CD8-positive, alpha-beta T cell (primary cell): ENCODE measurements at regions of chr5 and their contacts with region 1.

Region 1: DNA sequence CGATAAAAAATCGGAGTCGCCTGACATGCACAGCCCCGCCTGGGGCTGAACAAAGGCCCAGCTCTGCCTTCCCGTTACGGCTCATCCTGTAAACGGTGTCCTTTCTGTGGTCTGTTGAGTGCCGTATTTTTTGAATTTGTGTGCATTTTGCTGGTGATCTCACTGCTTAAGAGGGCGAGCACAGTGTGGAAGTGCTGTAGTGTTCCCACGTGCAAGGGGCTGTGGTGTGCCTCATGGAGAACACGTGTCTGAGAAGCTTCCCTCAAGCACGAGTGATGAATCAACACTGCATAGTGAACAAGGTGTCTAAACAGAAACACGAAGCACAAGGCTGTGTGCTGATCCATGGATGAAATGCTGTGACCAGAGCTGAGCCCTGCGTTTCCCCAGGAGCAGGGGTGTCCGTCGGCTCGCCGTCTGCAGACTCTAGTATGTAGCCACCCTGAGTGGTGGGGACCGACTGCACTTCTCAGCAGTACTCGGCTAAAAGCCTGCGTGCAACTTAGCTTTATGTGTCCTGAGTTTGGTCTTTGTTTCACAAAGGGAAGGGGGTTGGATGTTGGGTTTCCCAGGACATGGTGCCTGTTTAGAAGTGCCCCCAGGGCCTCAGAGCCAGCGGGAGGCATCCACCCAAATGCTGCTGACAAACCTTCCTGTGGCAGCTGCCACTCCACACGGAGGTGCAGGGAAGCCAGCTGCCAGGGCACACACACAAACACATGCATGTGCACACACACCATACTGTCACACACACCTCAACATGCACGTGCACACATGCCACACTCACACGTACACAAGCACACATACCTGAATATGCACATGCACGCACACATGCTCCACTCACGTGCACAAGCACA is 77.2 kb upstream of the IRX4 start:
- DNase-seq: no peak
- ATAC-seq: no peak
- H3K4me3 ChIP-seq: no peak overlapping the region
- H3K4me3 Mint-ChIP-seq: no peak overlapping the region
- H3K27ac ChIP-seq: no peak overlapping the region
- H3K27ac Mint-ChIP-seq: no peak overlapping the region
- H3K4me1 ChIP-seq: no peaks in the 10 kb centered on the region
- H3K4me1 Mint-ChIP-seq: no peaks in the 10 kb centered on the region
- H3K27me3 ChIP-seq: no peaks in the 10 kb centered on the region
- H3K27me3 Mint-ChIP-seq: peaks cover 18% of the 10 kb centered on the region
- CTCF ChIP-seq: no peak

Region 2: DNA sequence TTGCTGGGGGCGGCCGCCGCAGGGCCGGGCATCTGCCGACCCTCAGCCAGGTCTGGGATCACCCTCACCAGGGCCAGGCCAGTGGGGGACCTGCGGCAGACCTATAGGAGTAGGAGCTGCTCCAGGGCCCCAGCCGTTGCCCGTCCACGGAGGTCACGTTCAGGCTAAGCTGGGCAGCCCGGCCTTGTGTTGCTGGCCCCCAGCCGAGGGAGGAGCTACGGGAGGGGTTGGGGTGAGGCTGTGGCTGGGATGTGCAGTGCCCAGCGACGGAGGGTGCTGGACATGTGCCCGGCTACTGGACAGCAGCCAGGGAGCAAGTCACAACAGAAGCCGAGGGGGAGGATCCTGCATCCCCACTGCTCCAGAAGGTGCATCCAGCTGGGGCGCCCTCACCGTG is 798.1 kb before region 1 on chr5:
- CTCF ChIA-PET with region 1: no interaction called
- POLR2A ChIA-PET with region 1: no interaction called
- intact Hi-C with region 1: no loop called
- DNase-seq: no peak
- ATAC-seq: no peak
- H3K4me3 ChIP-seq: no peak overlapping the region
- H3K4me3 Mint-ChIP-seq: no peak overlapping the region
- H3K27ac ChIP-seq: no peak overlapping the region
- H3K27ac Mint-ChIP-seq: no peak overlapping the region
- H3K4me1 ChIP-seq: no peaks in the 10 kb centered on the region
- H3K4me1 Mint-ChIP-seq: no peaks in the 10 kb centered on the region
- H3K27me3 ChIP-seq: peaks cover 0 to 6% of the 10 kb centered on the region in 2 experiments
- H3K27me3 Mint-ChIP-seq: peaks cover 26% of the 10 kb centered on the region
- CTCF ChIP-seq: no peak

Region 3: GRCh38 chr5:1763548-1763911 is 196.4 kb before region 1 on chr5:
- CTCF ChIA-PET with region 1: no interaction called
- POLR2A ChIA-PET with region 1: no interaction called
- intact Hi-C with region 1: loop called in 1 of 2 experiments (anchors 5 kb)
- DNase-seq: peak in 6 of 9 experiments; percentile 17 to 61 (median 48)
- ATAC-seq: no peak
- H3K4me3 ChIP-seq: no peak overlapping the region
- H3K4me3 Mint-ChIP-seq: no peak overlapping the region
- H3K27ac ChIP-seq: no peak overlapping the region
- H3K27ac Mint-ChIP-seq: no peak overlapping the region
- H3K4me1 ChIP-seq: no peaks in the 10 kb centered on the region
- H3K4me1 Mint-ChIP-seq: no peaks in the 10 kb centered on the region
- H3K27me3 ChIP-seq: no peaks in the 10 kb centered on the region
- H3K27me3 Mint-ChIP-seq: peaks cover 14% of the 10 kb centered on the region
- CTCF ChIP-seq: peak; percentile 58

Region 4: GRCh38 chr5:2075365-2075764 is 115.4 kb after region 1 on chr5:
- CTCF ChIA-PET with region 1: no interaction called
- POLR2A ChIA-PET with region 1: no interaction called
- intact Hi-C with region 1: no loop called
- DNase-seq: no peak
- ATAC-seq: no peak
- H3K4me3 ChIP-seq: no peak overlapping the region
- H3K4me3 Mint-ChIP-seq: no peak overlapping the region
- H3K27ac ChIP-seq: no peak overlapping the region
- H3K27ac Mint-ChIP-seq: no peak overlapping the region
- H3K4me1 ChIP-seq: no peaks in the 10 kb centered on the region
- H3K4me1 Mint-ChIP-seq: no peaks in the 10 kb centered on the region
- H3K27me3 ChIP-seq: no peaks in the 10 kb centered on the region
- H3K27me3 Mint-ChIP-seq: peaks cover 24% of the 10 kb centered on the region
- CTCF ChIP-seq: no peak

Region 5: DNA sequence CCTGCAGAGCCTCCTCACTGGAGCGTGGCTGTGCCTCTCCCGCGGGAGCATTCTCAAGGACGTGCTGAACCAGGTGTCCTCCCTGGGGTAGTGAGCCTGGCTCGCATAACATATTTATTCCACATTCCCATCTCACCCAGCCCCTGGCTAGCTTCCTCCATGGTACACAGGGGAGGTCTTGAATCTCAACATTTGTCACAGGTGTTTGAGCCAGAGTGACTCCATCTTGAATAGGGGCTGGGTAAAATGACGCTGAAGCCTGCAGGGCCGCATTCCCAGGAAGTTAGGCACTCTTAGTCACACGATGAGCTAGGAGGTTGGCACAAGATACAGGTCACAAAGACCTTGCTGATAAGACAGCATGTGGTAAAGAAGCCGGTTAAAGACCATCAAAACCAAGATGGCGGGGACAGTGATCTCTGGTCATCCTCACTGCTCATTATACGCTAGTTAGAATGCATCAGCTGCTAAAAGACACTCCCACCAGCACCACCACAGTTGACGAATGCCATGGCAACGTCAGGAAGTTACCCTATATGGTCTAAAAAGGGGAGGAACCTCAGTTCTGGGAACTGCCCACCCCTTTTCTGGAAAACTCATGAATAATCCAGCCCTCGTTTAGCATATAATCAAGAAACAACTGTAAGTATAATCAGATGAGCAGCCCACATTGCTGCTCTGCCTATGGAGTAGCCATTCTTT is 196.6 kb after region 1 on chr5:
- CTCF ChIA-PET with region 1: no interaction called
- POLR2A ChIA-PET with region 1: no interaction called
- intact Hi-C with region 1: no loop called
- DNase-seq: no peak
- ATAC-seq: no peak
- H3K4me3 ChIP-seq: no peak overlapping the region
- H3K4me3 Mint-ChIP-seq: no peak overlapping the region
- H3K27ac ChIP-seq: no peak overlapping the region
- H3K27ac Mint-ChIP-seq: no peak overlapping the region
- H3K4me1 ChIP-seq: no peaks in the 10 kb centered on the region
- H3K4me1 Mint-ChIP-seq: no peaks in the 10 kb centered on the region
- H3K27me3 ChIP-seq: no peaks in the 10 kb centered on the region
- H3K27me3 Mint-ChIP-seq: peaks cover 2% of the 10 kb centered on the region
- CTCF ChIP-seq: no peak